KBM-7 (cell line): ENCODE measurements at regions of chr2 and their contacts with region 1.

Region 1: DNA sequence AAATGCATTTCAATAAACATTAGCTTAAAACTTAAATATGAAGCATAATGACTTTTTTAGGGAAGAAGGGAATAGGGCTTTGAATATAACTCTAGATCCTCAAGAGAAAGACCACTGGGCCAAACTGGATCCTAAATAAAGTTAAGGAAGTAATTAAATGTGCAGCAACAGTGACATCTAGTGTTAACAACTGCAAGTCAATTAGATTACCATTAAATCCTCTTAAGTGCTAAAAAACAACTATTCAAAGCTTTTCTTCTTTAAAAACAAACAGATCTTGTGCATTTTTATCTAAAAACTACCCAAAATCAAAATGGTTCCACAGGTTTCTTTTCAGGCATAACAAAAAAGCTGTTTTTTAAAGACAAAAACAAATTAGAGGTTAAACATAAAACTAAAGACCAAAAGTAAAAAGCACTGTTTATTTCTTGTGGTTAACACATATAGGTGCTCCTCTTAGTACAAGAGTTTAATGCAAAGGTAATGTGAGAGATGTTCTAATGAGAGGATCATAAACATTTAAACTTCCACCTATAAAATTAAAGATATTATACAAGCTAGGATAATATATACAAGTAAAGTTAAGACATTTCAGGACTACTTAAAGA is 111.4 kb downstream of the THADA start:
- DNase-seq: peak; percentile 63

Region 2: GRCh38 chr2:42828487-42829425 is 655.7 kb before region 1 on chr2:
- in situ Hi-C with region 1: loop called (anchors 25 kb)
- DNase-seq: peak; percentile 79

Region 3: DNA sequence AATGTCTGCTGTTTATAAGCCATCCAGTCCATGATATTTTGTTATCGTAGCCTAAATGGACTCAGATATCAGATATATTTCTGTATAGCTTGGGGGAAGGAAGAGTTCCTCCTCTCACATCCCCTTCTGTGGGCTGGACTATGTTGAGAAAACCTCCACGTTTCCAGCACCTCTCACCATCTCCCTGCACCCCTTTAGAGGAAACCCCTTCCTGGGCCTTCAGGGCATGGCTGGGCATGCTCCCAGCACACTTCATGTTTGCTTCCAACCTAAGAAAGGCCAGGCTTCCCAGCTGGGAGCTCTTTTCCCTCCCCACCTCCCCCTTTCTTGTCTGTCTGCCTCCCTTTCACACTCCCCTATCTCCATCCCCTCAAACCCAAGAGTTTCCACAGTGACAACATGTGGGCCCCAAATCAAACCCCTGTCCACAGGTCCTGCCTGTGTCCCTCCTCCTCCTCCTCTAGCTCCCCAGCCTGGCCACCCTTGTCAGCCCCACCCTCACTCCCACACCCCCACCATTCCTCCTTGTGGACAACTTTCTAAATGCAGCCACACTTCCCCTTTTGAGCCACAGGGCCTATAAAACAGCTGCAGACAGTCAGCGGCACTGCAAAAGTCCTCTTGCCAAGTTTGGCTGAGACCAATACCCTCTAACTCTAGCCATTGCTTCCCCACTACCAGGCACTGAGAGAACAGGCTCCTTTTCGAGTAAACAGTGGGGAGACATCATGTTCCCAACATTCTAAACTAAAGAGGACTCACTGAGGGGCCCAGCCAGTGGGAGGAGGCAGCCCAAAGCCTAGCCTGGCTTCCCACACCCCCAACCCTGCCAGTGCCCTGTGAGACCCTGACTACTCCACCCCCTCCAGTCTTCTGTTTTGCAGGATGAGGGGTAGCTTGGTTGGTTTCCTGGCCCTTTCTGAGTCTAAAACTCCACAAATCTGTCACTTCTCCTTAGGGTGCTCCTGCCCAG is 378.6 kb before region 1 on chr2:
- in situ Hi-C with region 1: loop called (anchors 25 kb)
- DNase-seq: peak; percentile 92